ENCODE measurements at regions of chr4 and their contacts with region 1.

Region 1: DNA sequence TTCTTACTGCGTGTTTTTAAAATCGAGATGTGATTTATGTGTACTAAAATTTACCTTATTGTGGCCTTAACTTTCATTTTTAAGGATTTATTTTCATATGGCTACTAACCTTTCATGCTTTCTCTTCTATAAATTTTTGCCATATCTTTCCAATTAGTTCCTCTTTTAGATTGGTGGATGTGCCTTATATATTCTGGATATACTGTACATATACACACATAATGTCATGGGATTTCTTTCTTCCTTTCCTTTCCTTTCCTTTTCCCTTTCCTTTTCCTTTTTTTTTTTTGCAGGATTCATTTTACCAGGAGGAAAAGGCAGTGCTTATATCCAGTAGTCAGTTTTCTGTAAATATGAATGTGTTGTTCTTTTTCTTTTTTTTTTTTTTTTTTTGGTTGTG is 37.2 kb downstream of the FHIP1A start:
- DNase-seq: no peak
- ATAC-seq: no peak
- H3K4me3 ChIP-seq: no peak overlapping the region
- H3K27ac ChIP-seq: no peak overlapping the region
- H3K4me1 ChIP-seq: peaks cover 29% of the 10 kb centered on the region
- H3K27me3 ChIP-seq: no peaks in the 10 kb centered on the region
- CTCF ChIP-seq: no peak

Region 2: GRCh38 chr4:151376540-151376939 is 69.7 kb before region 1 on chr4:
- intact Hi-C with region 1: no loop called
- DNase-seq: no peak
- ATAC-seq: no peak
- H3K4me3 ChIP-seq: no peak overlapping the region
- H3K27ac ChIP-seq: no peak overlapping the region
- H3K4me1 ChIP-seq: no peaks in the 10 kb centered on the region
- H3K27me3 ChIP-seq: no peaks in the 10 kb centered on the region
- CTCF ChIP-seq: no peak

Region 3: DNA sequence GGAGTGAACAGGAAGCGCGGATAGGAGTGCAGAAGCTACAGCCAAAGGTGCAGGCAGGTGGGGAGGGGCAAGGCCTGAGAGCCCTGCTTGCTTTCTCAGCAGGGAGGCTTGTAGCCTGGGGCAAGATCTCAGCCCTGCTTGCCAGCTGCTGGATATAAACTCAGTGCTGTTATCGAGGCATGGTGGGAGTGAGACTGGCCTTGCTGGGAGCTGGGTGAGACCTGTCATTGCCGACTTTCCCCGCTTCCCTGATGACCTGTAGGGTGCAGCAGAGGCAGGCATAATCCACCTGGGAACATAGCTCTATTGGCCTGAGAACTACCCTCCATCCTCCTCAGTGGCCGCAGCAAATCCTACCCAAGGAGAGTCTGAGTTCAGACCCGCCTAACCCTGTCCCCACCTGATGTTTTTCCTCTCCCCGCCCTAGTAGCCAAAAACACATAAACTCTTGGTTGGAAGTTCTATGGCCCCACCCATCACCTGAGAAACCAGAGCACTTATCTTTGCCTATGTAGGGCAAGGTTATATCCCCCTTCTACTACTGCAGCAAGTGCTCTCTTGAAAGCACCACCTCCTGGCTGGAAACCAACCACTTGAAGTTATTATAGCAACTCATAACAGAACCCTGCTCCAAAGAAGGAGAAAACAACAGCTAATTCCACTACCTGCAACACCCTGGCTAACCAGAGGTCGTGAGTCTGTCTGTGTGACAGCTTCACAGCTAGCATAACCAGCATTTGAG is 43.4 kb after region 1 on chr4:
- intact Hi-C with region 1: loop called in 1 of 2 experiments (anchors 1 kb)
- DNase-seq: no peak
- ATAC-seq: no peak
- H3K4me3 ChIP-seq: no peak overlapping the region
- H3K27ac ChIP-seq: no peak overlapping the region
- H3K4me1 ChIP-seq: peaks cover 4% of the 10 kb centered on the region
- H3K27me3 ChIP-seq: no peaks in the 10 kb centered on the region
- CTCF ChIP-seq: no peak

Measured in psoas muscle (tissue), 8 donors.